ENCODE measurements at regions of chr19 and their contacts with region 1.

Region 1: GRCh38 chr19:14073261-14073924 is 807 bp downstream of the MISP3 start:
- DNase-seq: peak; percentile 82
- ATAC-seq: peak; percentile 79
- H3K4me3 Mint-ChIP-seq: peak overlapping the region; percentile 84
- H3K27ac Mint-ChIP-seq: peak overlapping the region; percentile 81
- H3K4me1 Mint-ChIP-seq: peaks cover 23% of the 10 kb centered on the region
- H3K27me3 Mint-ChIP-seq: peaks cover 3% of the 10 kb centered on the region

Region 2: DNA sequence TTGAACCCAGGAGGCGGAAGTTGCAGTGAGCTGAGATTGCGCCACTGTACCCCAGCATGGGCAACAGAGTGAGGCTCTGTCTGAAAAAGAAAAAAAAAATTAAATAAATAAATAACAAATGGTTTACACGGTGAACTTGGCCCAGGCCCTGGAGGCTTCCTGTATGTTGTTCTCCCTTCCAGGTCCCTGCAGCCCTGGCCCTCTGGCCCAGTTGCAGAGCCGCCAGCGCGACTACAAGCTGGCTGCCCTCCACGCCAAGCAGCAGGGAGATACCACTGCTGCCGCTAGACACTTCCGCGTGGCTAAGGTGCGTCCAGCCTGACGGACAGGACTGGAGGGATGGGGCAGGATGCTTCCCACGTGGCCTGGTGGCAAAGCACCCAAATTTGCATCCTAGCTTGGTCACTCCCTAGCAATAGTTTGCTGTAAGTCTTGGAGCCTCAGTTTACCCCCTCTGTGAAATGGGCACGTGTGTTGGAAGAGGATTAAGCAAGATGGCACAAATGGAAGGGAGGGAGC is 155.4 kb before region 1 on chr19:
- CTCF ChIA-PET with region 1: no interaction called
- DNase-seq: no peak
- ATAC-seq: no peak
- H3K4me3 Mint-ChIP-seq: no peak overlapping the region
- H3K27ac Mint-ChIP-seq: no peak overlapping the region
- H3K4me1 Mint-ChIP-seq: peaks cover 4% of the 10 kb centered on the region
- H3K27me3 Mint-ChIP-seq: no peaks in the 10 kb centered on the region

Region 3: GRCh38 chr19:14006243-14006765 is 67.1 kb before region 1 on chr19 and contains the start of gene RFX1:
- CTCF ChIA-PET with region 1: interaction called, 19 read pairs
- DNase-seq: peak; percentile 100
- ATAC-seq: peak; percentile 80
- H3K4me3 Mint-ChIP-seq: peak within 1 kb of the TSS; percentile 97
- H3K27ac Mint-ChIP-seq: peak within 1 kb of the TSS; percentile 99
- H3K4me1 Mint-ChIP-seq: peaks cover 39% of the 10 kb centered on the region
- H3K27me3 Mint-ChIP-seq: no peaks in the 10 kb centered on the region
- total RNA-seq, gene RFX1: 16.0 to 17.8 TPM

Region 4: DNA sequence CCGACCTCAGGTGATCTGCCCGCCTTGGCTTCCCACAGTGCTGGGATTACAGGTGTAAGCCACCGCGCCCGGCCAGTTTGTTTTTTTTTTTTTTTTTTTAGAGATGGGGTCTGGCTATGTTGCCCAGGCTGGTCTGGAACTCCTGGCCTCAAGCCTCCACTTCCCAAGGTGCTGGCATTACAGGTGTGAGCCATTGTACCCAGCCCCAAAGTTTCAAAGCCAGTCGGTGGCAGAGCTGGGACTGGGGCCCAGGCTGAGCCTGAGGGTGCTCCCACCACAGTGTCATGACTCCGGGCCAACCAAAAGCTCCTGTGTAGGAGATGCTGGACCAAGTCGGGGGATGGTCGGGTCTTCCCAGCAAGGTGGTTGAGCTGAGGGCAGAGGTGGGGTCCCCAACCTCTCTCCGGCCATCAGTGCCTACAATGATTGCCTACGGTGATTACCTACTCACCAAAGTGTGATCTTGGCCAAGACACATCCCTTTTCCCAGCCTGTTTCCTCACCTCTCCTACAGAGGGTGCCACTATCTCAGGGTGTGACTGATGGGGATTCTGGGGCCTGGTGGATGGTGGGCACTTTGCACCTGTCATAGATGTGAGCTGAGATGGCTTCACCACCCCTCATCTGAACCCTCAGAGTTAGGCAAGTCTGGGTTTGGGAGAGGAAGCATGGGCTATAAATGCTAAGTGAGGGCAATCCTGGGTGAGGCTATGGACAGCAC is 23.0 kb after region 1 on chr19:
- CTCF ChIA-PET with region 1: interaction called, 10 read pairs
- DNase-seq: no peak
- ATAC-seq: no peak
- H3K4me3 Mint-ChIP-seq: no peak overlapping the region
- H3K27ac Mint-ChIP-seq: no peak overlapping the region
- H3K4me1 Mint-ChIP-seq: peaks cover 12% of the 10 kb centered on the region
- H3K27me3 Mint-ChIP-seq: no peaks in the 10 kb centered on the region

Measured in activated CD8-positive, alpha-beta memory T cell treated with anti-CD3 and anti-CD28 coated beads, Interleukin-2, amount 10 ng/mL, durations not matched to agents 7 days and 5 days (primary cell).